ENCODE measurements at regions of chr21 and their contacts with region 1.

Region 1: GRCh38 chr21:42107881-42108553 is 36.9 kb downstream of the UMODL1 start:
- DNase-seq: peak; percentile 77 to 87
- ATAC-seq: peak; percentile 83
- H3K4me3 ChIP-seq: no peak overlapping the region
- H3K27ac ChIP-seq: no peak overlapping the region
- H3K4me1 ChIP-seq: no peaks in the 10 kb centered on the region
- H3K27me3 ChIP-seq: no peaks in the 10 kb centered on the region

Region 2: GRCh38 chr21:41933313-41934086 is 174.5 kb before region 1 on chr21:
- intact Hi-C with region 1: loop called in 1 of 2 experiments (anchors 5 kb)
- DNase-seq: no peak
- ATAC-seq: peak; percentile 51
- H3K4me3 ChIP-seq: no peak overlapping the region
- H3K27ac ChIP-seq: peak overlapping the region in 1 of 2 donors; percentile 67
- H3K4me1 ChIP-seq: peaks cover 0 to 7% of the 10 kb centered on the region in 2 donors
- H3K27me3 ChIP-seq: no peaks in the 10 kb centered on the region